GM10248 (cell line): ENCODE measurements at regions of chr12 and their contacts with region 1.

Region 1: GRCh38 chr12:83404521-83404920 is 717.8 kb downstream of the TMTC2 start:
- DNase-seq: no peak
- CTCF ChIP-seq: no peak

Region 2: DNA sequence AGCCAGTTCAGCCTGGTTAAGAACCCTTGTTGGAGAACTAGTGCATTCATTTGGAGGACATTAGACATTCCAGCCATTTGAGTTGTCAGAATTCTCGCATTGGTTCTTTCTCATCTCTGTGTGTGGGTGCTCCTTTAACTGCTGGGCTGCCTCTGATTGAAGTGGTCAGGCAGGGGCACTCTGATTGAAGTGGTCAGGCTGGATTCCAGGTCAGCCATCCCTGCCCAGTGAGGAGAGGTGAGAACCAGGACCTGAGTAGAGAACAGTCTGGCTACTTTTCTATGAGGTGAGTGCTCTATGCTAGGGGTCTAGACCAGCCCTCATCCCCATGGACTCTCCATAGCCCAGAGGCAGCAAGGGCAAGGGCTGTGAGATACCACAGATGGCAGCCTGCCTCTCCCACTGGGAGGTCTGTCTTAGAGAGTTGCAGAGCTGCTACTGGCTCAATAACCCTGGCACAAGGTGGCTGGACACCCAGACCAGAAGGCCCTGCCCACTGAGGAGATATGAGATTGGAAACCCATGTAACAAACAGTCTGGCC is 26.3 kb before region 1 on chr12:
- CTCF ChIA-PET with region 1: no interaction called
- POLR2A ChIA-PET with region 1: no interaction called
- DNase-seq: no peak
- CTCF ChIP-seq: no peak

Region 3: GRCh38 chr12:83389237-83389996 is 15.1 kb before region 1 on chr12:
- CTCF ChIA-PET with region 1: interaction called, 17 read pairs
- POLR2A ChIA-PET with region 1: no interaction called
- DNase-seq: no peak
- CTCF ChIP-seq: peak; percentile 32

Region 4: GRCh38 chr12:83505586-83505985 is 101.1 kb after region 1 on chr12:
- CTCF ChIA-PET with region 1: no interaction called
- POLR2A ChIA-PET with region 1: no interaction called
- DNase-seq: no peak
- CTCF ChIP-seq: no peak